CD14-positive monocyte (primary cell): ENCODE measurements at regions of chr11 and their contacts with region 1.

Region 1: DNA sequence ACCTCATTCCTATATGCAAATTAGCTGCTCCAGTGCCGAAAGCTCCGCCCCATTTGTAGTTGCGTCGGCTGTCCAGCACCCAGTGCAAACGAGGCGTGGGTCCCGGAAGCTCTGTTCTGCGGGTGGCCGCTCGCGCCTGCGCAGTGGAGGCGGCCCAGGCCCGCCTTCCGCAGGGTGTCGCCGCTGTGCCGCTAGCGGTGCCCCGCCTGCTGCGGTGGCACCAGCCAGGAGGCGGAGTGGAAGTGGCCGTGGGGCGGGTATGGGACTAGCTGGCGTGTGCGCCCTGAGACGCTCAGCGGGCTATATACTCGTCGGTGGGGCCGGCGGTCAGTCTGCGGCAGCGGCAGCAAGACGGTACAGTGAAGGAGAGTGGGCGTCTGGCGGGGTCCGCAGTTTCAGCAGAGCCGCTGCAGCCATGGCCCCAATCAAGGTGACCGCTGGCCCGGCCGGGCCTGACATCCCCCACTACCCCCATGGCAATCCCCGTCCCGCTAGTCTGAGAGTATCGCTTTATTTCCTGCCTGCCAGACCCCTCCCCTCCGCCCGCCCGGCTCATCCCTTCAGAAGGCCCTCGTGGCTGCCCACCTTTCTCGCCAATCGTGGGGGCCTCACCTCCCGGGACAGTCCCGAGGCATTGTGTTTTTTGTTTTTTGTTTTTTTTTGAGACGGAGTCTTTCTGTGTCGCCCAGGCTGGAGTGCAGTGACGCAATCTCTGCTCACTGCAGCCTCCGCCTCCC is at the start of gene PRDX5:
- DNase-seq: peak; percentile 96 to 98 (median 98)
- H3K4me3 ChIP-seq: peak within 1 kb of the TSS; percentile 51 to 93 (median 91)
- H3K4me3 Mint-ChIP-seq: peak within 1 kb of the TSS; percentile 88 to 94
- H3K27ac ChIP-seq: peak within 1 kb of the TSS; percentile 96 to 97
- H3K27ac Mint-ChIP-seq: peak within 1 kb of the TSS; percentile 98 to 99 (median 99)
- H3K4me1 ChIP-seq: peaks cover 28 to 43% of the 10 kb centered on the region in 2 donors
- H3K4me1 Mint-ChIP-seq: peaks cover 29% of the 10 kb centered on the region
- H3K27me3 ChIP-seq: no peaks in the 10 kb centered on the region
- H3K27me3 Mint-ChIP-seq: peaks cover 0 to 1% (median 0%) of the 10 kb centered on the region in 3 donors
- CTCF ChIP-seq: peak; percentile 38
- polyA plus RNA-seq, gene PRDX5: 136 to 318 (median 286) TPM

Region 2: GRCh38 chr11:63888170-63889086 is 429.7 kb before region 1 on chr11:
- intact Hi-C with region 1: no loop called
- DNase-seq: peak; percentile 44 to 73 (median 65)
- H3K4me3 ChIP-seq: peak overlapping the region; percentile 20 to 70 (median 30)
- H3K4me3 Mint-ChIP-seq: peak overlapping the region; percentile 77 to 95
- H3K27ac ChIP-seq: peak overlapping the region; percentile 51 to 81
- H3K27ac Mint-ChIP-seq: peak overlapping the region; percentile 80 to 96 (median 92)
- H3K4me1 ChIP-seq: peaks cover 49 to 57% of the 10 kb centered on the region in 2 donors
- H3K4me1 Mint-ChIP-seq: peaks cover 83% of the 10 kb centered on the region
- H3K27me3 ChIP-seq: no peaks in the 10 kb centered on the region
- H3K27me3 Mint-ChIP-seq: peaks cover 0 to 4% (median 2%) of the 10 kb centered on the region in 3 donors
- CTCF ChIP-seq: no peak

Region 3: GRCh38 chr11:64269380-64270234 is 48.5 kb before region 1 on chr11:
- intact Hi-C with region 1: no loop called
- DNase-seq: peak; percentile 98 to 100 (median 99)
- H3K4me3 ChIP-seq: peak overlapping the region; percentile 61 to 95 (median 67)
- H3K4me3 Mint-ChIP-seq: peak overlapping the region; percentile 94 to 98
- H3K27ac ChIP-seq: peak overlapping the region; percentile 84 to 97
- H3K27ac Mint-ChIP-seq: peak overlapping the region; percentile 96 to 99 (median 98)
- H3K4me1 ChIP-seq: peaks cover 29 to 34% of the 10 kb centered on the region in 2 donors
- H3K4me1 Mint-ChIP-seq: peaks cover 29% of the 10 kb centered on the region
- H3K27me3 ChIP-seq: no peaks in the 10 kb centered on the region
- H3K27me3 Mint-ChIP-seq: no peaks in the 10 kb centered on the region
- CTCF ChIP-seq: peak; percentile 17

Region 4: DNA sequence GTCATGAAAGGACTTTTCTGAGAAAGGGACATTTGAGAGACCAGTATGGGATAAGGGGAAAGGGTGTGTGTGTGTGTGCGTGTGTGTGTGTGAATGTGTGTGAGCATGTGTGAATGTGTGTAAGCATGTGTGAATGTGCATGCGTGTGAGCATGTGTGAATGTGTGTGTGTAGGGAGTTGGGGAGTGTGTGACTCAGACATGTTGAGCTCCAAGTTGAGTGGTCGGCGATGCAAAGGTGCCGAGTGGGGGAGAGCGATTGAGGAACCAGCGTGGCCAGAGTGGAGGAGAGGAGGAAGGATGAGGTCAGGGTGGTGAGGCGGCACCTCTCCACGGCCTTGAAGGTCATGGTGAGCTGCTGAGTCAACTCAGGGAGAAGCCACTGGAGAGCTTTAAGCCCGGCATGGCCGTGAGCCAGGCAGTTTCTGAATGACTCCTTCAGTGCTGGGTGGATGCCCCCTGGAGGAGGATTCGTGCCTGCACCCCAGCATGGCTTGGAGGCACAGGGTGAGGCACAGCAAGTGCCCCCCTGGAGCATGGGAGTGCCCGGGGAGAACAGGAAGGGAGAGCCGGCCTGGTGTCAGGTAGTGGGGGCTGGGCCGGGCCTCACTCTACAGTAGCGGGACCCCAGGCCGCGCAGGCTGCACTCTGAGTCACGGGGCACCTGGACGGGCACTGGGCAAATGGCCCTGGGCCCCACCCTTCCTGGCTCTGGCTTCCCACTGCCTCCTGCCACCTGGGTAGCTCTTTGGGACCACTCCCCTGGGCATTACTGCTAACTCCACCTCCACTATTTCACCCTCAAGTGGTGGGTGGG is 13.6 kb after region 1 on chr11:
- intact Hi-C with region 1: loop called in 1 of 2 experiments (anchors 2 kb)
- DNase-seq: peak; percentile 94 to 99 (median 99)
- H3K4me3 ChIP-seq: peak overlapping the region in 1 of 3 experiments; percentile 52
- H3K4me3 Mint-ChIP-seq: peak overlapping the region in 1 of 2 donors; percentile 77
- H3K27ac ChIP-seq: peak overlapping the region; percentile 46 to 53
- H3K27ac Mint-ChIP-seq: peak overlapping the region; percentile 57 to 89 (median 82)
- H3K4me1 ChIP-seq: peaks cover 32 to 37% of the 10 kb centered on the region in 2 donors
- H3K4me1 Mint-ChIP-seq: peaks cover 39% of the 10 kb centered on the region
- H3K27me3 ChIP-seq: no peaks in the 10 kb centered on the region
- H3K27me3 Mint-ChIP-seq: peaks cover 0 to 5% (median 0%) of the 10 kb centered on the region in 3 donors
- CTCF ChIP-seq: peak; percentile 94

Region 5: DNA sequence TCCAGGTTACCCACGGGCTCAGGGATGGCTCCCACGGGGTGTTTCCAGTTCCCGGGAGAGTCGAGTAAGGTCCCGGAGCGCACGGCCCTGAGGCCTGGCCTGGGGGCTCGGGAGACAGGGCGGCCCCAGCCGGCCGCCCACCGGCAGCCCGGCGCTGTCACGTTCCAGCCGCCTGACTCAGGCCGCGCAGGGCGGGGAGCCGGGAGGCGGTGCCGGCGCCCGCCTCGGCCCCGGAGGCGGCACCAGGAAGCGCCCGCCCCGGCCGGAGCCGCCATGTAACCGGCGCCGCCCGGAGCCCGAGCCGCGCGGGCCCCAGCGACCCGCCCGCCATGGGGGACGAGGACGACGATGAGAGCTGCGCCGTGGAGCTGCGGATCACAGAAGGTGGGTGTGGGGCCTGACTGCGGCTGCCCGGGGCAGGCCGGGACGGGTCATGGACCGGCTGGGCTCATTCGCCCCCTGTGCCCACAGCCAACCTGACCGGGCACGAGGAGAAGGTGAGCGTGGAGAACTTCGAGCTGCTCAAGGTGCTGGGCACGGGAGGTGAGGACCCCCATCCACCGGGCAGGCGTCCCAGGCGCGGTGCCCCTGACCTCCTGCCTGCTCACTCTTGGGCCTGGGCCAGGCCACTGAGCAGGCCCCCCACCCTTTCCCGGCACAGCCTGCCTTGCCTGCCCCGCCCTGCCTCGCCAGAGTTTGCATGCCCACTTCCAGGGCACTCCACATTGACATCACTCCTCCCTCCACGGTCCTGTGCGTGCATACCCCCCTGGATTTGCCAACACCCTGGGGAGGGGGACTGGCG is 41.0 kb after region 1 on chr11 and contains the start of gene RPS6KA4:
- intact Hi-C with region 1: loop called (anchors 5 kb)
- DNase-seq: peak; percentile 37 to 65 (median 52)
- H3K4me3 ChIP-seq: peak within 1 kb of the TSS; percentile 90 to 95 (median 91)
- H3K4me3 Mint-ChIP-seq: peak within 1 kb of the TSS; percentile 86 to 96
- H3K27ac ChIP-seq: peak within 1 kb of the TSS; percentile 50 to 80
- H3K27ac Mint-ChIP-seq: peak within 1 kb of the TSS; percentile 72 to 92 (median 85)
- H3K4me1 ChIP-seq: peaks cover 45 to 63% of the 10 kb centered on the region in 2 donors
- H3K4me1 Mint-ChIP-seq: peaks cover 51% of the 10 kb centered on the region
- H3K27me3 ChIP-seq: no peaks in the 10 kb centered on the region
- H3K27me3 Mint-ChIP-seq: no peaks in the 10 kb centered on the region
- CTCF ChIP-seq: no peak
- polyA plus RNA-seq, gene RPS6KA4: 16.2 to 110 (median 24.5) TPM

Region 6: GRCh38 chr11:65225279-65226102 is 907.4 kb after region 1 on chr11:
- intact Hi-C with region 1: no loop called
- DNase-seq: peak; percentile 17 to 38 (median 21)
- H3K4me3 ChIP-seq: peak overlapping the region; percentile 77 to 84 (median 82)
- H3K4me3 Mint-ChIP-seq: peak overlapping the region; percentile 96 to 98
- H3K27ac ChIP-seq: peak overlapping the region; percentile 2 to 12
- H3K27ac Mint-ChIP-seq: peak overlapping the region in 4 of 7 donors; percentile 20 to 66 (median 32)
- H3K4me1 ChIP-seq: peaks cover 42 to 47% of the 10 kb centered on the region in 2 donors
- H3K4me1 Mint-ChIP-seq: peaks cover 39% of the 10 kb centered on the region
- H3K27me3 ChIP-seq: no peaks in the 10 kb centered on the region
- H3K27me3 Mint-ChIP-seq: peaks cover 4 to 6% (median 4%) of the 10 kb centered on the region in 3 donors
- CTCF ChIP-seq: peak; percentile 29